CD4-positive, alpha-beta T cell (primary cell): ENCODE measurements at regions of chr16 and their contacts with region 1.

Region 1: GRCh38 chr16:46783800-46784199 is 35.7 kb upstream of the MYLK3 start:
- DNase-seq: no peak
- ATAC-seq: no peak
- H3K4me3 ChIP-seq: no peak overlapping the region
- H3K4me3 Mint-ChIP-seq: no peak overlapping the region
- H3K27ac ChIP-seq: no peak overlapping the region
- H3K27ac Mint-ChIP-seq: no peak overlapping the region
- H3K4me1 ChIP-seq: no peaks in the 10 kb centered on the region
- H3K4me1 Mint-ChIP-seq: peaks cover under 1% of the 10 kb centered on the region
- H3K27me3 ChIP-seq: no peaks in the 10 kb centered on the region
- H3K27me3 Mint-ChIP-seq: no peaks in the 10 kb centered on the region
- CTCF ChIP-seq: no peak

Region 2: GRCh38 chr16:46689365-46690280 is 94.2 kb before region 1 on chr16 and contains the start of gene ORC6:
- CTCF ChIA-PET with region 1: no interaction called
- POLR2A ChIA-PET with region 1: no interaction called
- intact Hi-C with region 1: loop called in 1 of 2 experiments (anchors 2 kb)
- DNase-seq: peak; percentile 92 to 97 (median 96)
- ATAC-seq: peak; percentile 72
- H3K4me3 ChIP-seq: peak within 1 kb of the TSS; percentile 94
- H3K4me3 Mint-ChIP-seq: no peak within 1 kb of the TSS
- H3K27ac ChIP-seq: peak within 1 kb of the TSS; percentile 91 to 98
- H3K27ac Mint-ChIP-seq: no peak within 1 kb of the TSS
- H3K4me1 ChIP-seq: peaks cover 23% of the 10 kb centered on the region
- H3K4me1 Mint-ChIP-seq: peaks cover 33% of the 10 kb centered on the region
- H3K27me3 ChIP-seq: no peaks in the 10 kb centered on the region
- H3K27me3 Mint-ChIP-seq: no peaks in the 10 kb centered on the region
- CTCF ChIP-seq: no peak
- total RNA-seq, gene ORC6: 3.7 to 3.8 TPM

Region 3: DNA sequence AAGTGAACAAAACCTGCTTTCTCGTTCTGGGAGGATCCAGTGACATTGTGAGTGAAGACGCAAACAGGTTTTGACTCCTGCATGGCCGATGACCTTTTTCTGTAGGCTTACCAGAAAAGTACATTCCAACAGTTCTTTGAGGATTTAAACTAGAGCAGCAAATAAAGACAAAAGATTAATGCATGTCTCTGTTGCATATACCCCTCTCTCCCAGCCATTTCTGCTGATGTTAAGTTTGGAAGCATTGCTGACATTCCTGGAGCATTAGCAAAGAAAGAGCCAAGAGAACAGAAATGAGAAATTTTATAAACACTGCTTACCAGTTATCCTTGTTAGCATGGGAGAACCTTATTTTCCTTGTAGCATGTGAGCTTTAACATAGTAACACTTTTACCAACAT is 1552.2 kb after region 1 on chr16:
- CTCF ChIA-PET with region 1: no interaction called
- POLR2A ChIA-PET with region 1: no interaction called
- intact Hi-C with region 1: no loop called
- DNase-seq: no peak
- ATAC-seq: no peak
- H3K4me3 ChIP-seq: no peak overlapping the region
- H3K4me3 Mint-ChIP-seq: no peak overlapping the region
- H3K27ac ChIP-seq: no peak overlapping the region
- H3K27ac Mint-ChIP-seq: no peak overlapping the region
- H3K4me1 ChIP-seq: no peaks in the 10 kb centered on the region
- H3K4me1 Mint-ChIP-seq: peaks cover 12% of the 10 kb centered on the region
- H3K27me3 ChIP-seq: no peaks in the 10 kb centered on the region
- H3K27me3 Mint-ChIP-seq: no peaks in the 10 kb centered on the region
- CTCF ChIP-seq: no peak